Endothelial cell of umbilical vein (primary cell): ENCODE measurements at regions of chr22 and their contacts with region 1.

Region 1: DNA sequence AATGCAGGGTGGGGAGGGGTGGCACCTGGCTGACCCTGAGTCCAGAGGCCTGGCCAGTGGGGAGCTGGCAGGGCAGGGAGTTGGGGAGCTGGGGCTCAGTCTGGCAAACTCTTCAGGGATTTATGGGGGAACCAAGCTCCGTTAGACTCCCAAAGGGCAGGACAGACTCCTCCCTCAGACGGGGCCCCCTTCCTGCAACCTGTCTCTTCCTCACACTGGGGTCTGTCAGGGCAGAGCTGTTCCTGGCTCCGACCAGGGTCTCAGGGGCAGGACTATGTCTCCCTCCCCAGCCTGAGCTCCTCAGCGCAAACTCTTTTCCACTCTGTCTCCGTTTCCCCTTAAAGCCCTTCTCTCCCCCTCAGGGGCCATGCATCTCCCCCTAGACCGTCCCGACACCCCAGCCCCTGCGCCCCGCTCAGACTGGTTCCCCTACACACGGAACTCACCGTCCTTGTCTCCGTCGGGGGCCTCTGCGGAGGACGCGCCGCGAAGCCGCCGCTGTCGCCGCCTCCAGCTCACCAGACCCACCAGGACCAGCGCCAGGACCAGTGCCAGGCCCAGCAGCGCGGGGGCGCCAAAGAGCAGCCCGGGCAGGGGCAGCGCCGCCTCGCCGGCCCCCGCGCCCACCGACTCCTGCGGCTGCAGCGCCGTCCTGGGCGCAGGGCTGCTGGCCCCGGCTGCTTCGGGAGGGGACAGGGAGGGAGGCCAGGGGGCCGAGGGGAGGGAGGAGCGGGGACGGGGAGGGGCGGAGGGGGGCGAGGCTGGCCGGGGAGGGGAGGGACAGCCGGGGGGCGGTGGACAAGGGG is 748 bp downstream of the TNFRSF13C start:
- DNase-seq: peak; percentile 49
- H3K4me3 ChIP-seq: peak overlapping the region in 1 of 3 experiments; percentile 19
- H3K27ac ChIP-seq: no peak overlapping the region
- H3K4me1 ChIP-seq: peaks cover 4% of the 10 kb centered on the region
- H3K27me3 ChIP-seq: peaks cover 9 to 14% of the 10 kb centered on the region in 2 experiments
- CTCF ChIP-seq: peak; percentile 74 to 78
- POLR2A ChIP-seq: no peak

Region 2: DNA sequence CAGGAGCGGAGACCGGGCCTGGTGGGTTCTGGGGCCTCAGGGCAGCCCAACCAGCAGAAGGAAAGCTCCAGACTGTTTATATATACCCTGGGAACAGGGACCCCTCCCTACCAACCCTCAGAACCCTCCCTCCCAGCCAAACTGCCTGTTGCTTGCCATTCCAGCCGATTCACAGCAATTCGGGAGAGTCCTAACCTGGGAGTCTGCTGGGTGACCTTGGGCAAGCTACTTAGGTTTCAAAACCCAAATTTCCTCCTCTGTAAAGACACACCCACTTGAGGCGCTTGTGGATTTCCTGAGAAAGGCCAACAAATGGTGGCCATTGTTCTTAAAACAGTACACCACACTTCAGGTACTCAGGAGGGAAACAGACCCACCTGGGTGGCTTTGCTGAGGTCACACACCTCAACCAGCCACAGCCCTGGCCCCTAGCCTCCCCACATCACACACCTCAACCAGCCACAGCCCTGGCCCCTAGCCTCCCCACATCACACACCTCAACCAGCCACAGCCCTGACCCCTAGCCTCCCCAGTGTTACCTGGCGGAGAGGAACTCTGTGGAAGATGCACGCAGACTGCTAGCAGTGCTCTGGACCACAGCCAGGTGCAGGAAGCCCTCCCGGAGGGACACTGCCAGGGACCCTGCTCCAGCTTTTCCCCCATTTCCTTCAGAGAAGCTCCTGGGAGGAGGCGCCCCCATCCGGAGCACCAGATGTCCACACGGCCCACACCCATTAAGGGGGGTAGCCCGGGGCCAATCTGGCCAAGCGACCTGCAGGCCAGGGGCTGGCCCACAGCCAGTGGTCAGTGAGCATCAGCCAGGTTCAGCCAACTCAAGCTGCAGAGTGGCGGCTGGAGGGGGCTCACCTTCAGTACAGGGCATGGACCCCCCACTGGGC is 17.2 kb before region 1 on chr22:
- CTCF ChIA-PET with region 1: interaction called, 28 read pairs
- POLR2A ChIA-PET with region 1: no interaction called
- dilution Hi-C with region 1: no loop called
- intact Hi-C with region 1: no loop called
- DNase-seq: no peak
- H3K4me3 ChIP-seq: no peak overlapping the region
- H3K27ac ChIP-seq: no peak overlapping the region
- H3K4me1 ChIP-seq: peaks cover 6% of the 10 kb centered on the region
- H3K27me3 ChIP-seq: peaks cover 29 to 41% of the 10 kb centered on the region in 2 experiments
- CTCF ChIP-seq: no peak
- POLR2A ChIP-seq: no peak

Region 3: GRCh38 chr22:41915035-41915785 is 10.6 kb before region 1 on chr22 and contains the start of gene SHISA8:
- CTCF ChIA-PET with region 1: interaction called, 28 read pairs
- POLR2A ChIA-PET with region 1: no interaction called
- dilution Hi-C with region 1: no loop called
- intact Hi-C with region 1: no loop called
- DNase-seq: peak; percentile 27
- H3K4me3 ChIP-seq: no peak within 1 kb of the TSS
- H3K27ac ChIP-seq: no peak within 1 kb of the TSS
- H3K4me1 ChIP-seq: peaks cover 16% of the 10 kb centered on the region
- H3K27me3 ChIP-seq: peaks cover 53 to 66% of the 10 kb centered on the region in 2 experiments
- CTCF ChIP-seq: no peak
- POLR2A ChIP-seq: no peak
- total RNA-seq, gene SHISA8: not detected in 2 replicates

Region 4: GRCh38 chr22:41946629-41947423 is 21.0 kb after region 1 on chr22 and contains the start of gene CENPM:
- CTCF ChIA-PET with region 1: interaction called, 62 read pairs
- POLR2A ChIA-PET with region 1: no interaction called
- dilution Hi-C with region 1: no loop called
- intact Hi-C with region 1: no loop called
- DNase-seq: peak; percentile 96
- H3K4me3 ChIP-seq: peak within 1 kb of the TSS; percentile 39 to 85 (median 57)
- H3K27ac ChIP-seq: peak within 1 kb of the TSS; percentile 44
- H3K4me1 ChIP-seq: peaks cover 33% of the 10 kb centered on the region
- H3K27me3 ChIP-seq: no peaks in the 10 kb centered on the region
- CTCF ChIP-seq: no peak
- POLR2A ChIP-seq: no peak
- total RNA-seq, gene CENPM: 30.4 and 34.5 TPM in 2 replicates